ENCODE measurements at regions of chrX and their contacts with region 1.

Region 1: GRCh38 chrX:110442640-110443039 is 84.0 kb downstream of the RTL9 start:
- DNase-seq: no peak
- H3K4me3 ChIP-seq: no peak overlapping the region
- H3K27ac ChIP-seq: no peak overlapping the region
- H3K4me1 ChIP-seq: peaks cover 9% of the 10 kb centered on the region
- H3K27me3 ChIP-seq: peaks cover 17% of the 10 kb centered on the region
- CTCF ChIP-seq: peak; percentile 28 to 40 (median 35)

Region 2: GRCh38 chrX:110847334-110847733 is 404.7 kb after region 1 on chrX:
- dilution Hi-C with region 1: loop called (anchors 25 kb)
- DNase-seq: peak; percentile 9
- H3K4me3 ChIP-seq: no peak overlapping the region
- H3K27ac ChIP-seq: no peak overlapping the region
- H3K4me1 ChIP-seq: no peaks in the 10 kb centered on the region
- H3K27me3 ChIP-seq: peaks cover 6% of the 10 kb centered on the region
- CTCF ChIP-seq: peak in 2 of 3 experiments; percentile 36 to 49

Measured in keratinocyte (primary cell).